Right cardiac atrium (tissue), 5 donors: ENCODE measurements at regions of chr11 and their contacts with region 1.

Region 1: GRCh38 chr11:48109046-48109666 is 107.5 kb upstream of the OR4B1 start:
- DNase-seq: no peak
- ATAC-seq: peak; percentile 47 to 56
- H3K4me3 ChIP-seq: no peak overlapping the region
- H3K27ac ChIP-seq: no peak overlapping the region
- H3K4me1 ChIP-seq: peaks cover 4% of the 10 kb centered on the region
- H3K27me3 ChIP-seq: no peaks in the 10 kb centered on the region

Region 2: GRCh38 chr11:47938791-47939560 is 170.2 kb before region 1 on chr11:
- intact Hi-C with region 1: loop called (anchors 5 kb)
- DNase-seq: no peak
- ATAC-seq: no peak
- H3K4me3 ChIP-seq: no peak overlapping the region
- H3K27ac ChIP-seq: no peak overlapping the region
- H3K4me1 ChIP-seq: no peaks in the 10 kb centered on the region
- H3K27me3 ChIP-seq: no peaks in the 10 kb centered on the region

Region 3: DNA sequence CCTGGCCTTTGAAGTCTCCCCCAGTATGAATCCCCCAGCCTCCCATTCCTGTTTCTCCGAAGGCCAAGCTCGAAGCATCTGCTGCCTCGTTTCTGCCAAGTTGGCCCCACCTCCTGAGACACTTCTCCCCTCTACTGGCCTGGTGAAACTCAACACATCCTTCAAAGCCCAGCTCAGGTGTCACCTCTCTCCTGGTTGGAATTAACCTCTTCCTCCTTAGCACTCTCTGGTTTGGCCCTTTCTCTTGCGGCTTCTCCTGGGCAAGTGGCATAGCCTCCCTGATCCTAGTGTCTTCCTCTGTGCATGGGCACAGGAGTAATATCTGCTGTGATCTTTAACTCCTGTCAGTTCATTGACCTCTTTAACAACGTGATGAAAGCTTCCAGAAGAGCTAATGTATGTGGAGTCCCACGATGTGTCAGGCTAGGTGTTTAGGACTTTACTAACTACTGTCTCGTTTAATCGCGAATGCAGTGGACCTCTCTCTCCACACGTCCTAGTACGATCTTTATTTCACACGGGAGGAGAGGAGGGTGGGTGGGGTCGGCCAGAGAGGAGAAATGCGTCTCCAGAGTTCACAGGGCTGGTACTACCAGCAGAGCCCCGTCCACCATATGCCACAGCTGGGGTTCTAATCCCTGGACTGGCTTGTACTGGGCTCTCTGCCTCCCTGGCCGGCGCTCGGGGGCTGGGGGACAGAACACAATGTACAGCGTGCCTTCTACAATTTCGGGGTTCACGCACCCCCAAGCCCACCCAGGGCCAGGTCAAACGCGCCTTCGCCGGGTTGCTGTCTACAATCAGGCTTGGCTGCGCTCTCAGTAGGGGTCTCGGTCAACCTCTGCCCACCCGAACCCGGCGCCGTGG is 129.5 kb before region 1 on chr11:
- intact Hi-C with region 1: loop called in 1 of 4 experiments (anchors 10 kb)
- DNase-seq: no peak
- ATAC-seq: peak; percentile 7 to 41
- H3K4me3 ChIP-seq: peak overlapping the region; percentile 95
- H3K27ac ChIP-seq: no peak overlapping the region
- H3K4me1 ChIP-seq: no peaks in the 10 kb centered on the region
- H3K27me3 ChIP-seq: no peaks in the 10 kb centered on the region

Region 4: DNA sequence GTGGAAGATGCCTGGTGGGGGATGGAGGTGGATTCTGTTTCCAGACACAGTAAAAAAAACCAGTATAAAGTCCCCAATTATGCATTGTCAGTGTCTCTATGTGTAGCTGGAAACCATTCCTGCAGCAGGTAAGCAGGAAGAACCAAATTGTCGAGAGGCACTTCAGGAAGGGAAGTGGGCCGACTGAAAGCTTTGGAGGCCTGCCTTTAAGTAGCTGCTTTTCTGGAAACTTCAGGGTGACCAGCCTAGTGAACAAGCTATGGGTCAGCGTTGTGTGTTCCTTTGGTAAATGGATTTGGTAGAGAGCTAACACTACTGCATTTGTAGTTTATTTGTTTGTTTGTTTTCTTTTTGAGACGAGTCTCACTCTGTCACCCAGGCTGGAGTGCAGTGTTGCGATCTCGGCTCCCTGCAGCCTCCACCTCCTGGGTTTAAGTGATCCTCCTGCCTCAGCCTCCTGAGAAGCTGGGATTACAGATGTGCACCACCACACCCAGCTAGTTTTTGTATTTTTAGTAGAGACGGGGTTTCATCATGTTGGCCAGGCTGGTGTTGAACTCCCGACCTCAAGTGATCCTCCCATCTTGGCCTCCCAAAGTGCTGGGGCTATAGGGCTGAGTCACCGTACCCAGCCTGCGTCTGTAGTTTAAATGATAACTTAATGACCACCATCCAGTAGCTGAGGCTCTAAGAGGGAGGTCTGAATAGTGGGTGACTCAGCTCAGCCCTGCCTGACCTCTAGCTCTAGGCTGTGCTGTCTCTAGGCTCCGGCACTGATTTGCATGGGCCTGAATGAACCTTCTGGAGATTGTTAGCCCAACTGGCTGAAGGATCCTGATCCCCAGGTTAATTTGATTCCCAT is 116.0 kb before region 1 on chr11:
- intact Hi-C with region 1: no loop called
- DNase-seq: no peak
- ATAC-seq: peak in 1 of 2 donors; percentile 30
- H3K4me3 ChIP-seq: no peak overlapping the region
- H3K27ac ChIP-seq: no peak overlapping the region
- H3K4me1 ChIP-seq: no peaks in the 10 kb centered on the region
- H3K27me3 ChIP-seq: no peaks in the 10 kb centered on the region